HCT116 (cell line): ENCODE measurements at regions of chr4 and their contacts with region 1.

Region 1: DNA sequence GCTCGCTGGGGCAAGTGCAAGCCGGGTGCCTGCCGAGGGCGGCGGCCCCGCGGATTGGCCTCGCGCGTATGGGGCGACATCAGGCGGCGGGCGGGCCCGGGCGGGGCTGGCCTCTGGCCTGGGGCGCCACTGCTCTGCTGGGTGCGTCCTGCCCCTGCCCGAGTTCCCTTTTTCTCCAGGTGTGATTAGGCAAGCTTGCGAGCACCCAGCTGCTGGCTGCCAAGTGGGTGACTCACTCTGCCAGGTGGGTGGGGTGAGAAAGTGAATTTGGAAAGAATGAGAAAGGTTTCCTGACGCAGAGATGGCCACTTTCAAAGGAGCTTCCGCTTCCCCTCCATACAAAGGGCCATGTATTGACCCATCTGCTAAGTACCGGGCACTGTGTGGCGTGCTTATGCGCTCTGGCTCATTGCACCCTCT is 32.5 kb downstream of the FGFBP1 start:
- DNase-seq: peak; percentile 95
- ATAC-seq: peak; percentile 95
- H3K4me3 ChIP-seq: peak overlapping the region; percentile 18 to 47
- H3K27ac ChIP-seq: peak overlapping the region; percentile 73
- H3K4me1 ChIP-seq: peaks cover 19 to 32% of the 10 kb centered on the region in 2 experiments
- H3K27me3 ChIP-seq: no peaks in the 10 kb centered on the region
- CTCF ChIP-seq: no peak
- POLR2A ChIP-seq: no peak
- RAD21 ChIP-seq: peak; percentile 43

Region 2: DNA sequence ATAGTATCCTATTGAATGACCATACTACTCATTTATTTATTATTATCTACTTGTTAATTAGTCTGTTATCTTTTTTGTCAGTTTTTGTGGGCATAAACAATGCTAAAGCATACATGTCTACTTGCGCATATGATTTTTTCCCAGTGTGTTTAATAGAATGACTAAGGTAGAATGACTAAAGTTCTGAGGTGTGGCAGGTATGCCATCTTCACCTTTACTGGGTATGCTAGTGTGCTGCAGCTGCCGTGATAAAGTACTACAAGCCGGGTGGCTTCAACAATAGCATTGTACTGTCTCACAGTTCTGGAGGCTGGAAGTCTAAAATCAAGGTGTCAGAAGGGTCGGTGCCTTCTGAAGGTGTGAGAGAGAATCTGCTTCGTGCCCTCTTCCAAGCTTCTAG is 108.7 kb before region 1 on chr4:
- CTCF ChIA-PET with region 1: no interaction called
- POLR2A ChIA-PET with region 1: no interaction called
- RAD21 ChIA-PET with region 1: no interaction called
- intact Hi-C with region 1: no loop called
- DNase-seq: no peak
- ATAC-seq: no peak
- H3K4me3 ChIP-seq: no peak overlapping the region
- H3K27ac ChIP-seq: no peak overlapping the region
- H3K4me1 ChIP-seq: no peaks in the 10 kb centered on the region
- H3K27me3 ChIP-seq: no peaks in the 10 kb centered on the region
- CTCF ChIP-seq: no peak
- POLR2A ChIP-seq: no peak
- RAD21 ChIP-seq: no peak

Region 3: GRCh38 chr4:15920723-15921591 is 14.9 kb after region 1 on chr4:
- CTCF ChIA-PET with region 1: no interaction called
- POLR2A ChIA-PET with region 1: interaction called, 10 read pairs
- RAD21 ChIA-PET with region 1: no interaction called
- intact Hi-C with region 1: no loop called
- DNase-seq: peak; percentile 89
- ATAC-seq: peak; percentile 95
- H3K4me3 ChIP-seq: peak overlapping the region in 1 of 2 experiments; percentile 3; a peak in 1 of 4 replicates
- H3K27ac ChIP-seq: peak overlapping the region; percentile 51; the same call in 1 of the 2 replicates
- H3K4me1 ChIP-seq: peaks cover 12 to 37% of the 10 kb centered on the region in 2 experiments
- H3K27me3 ChIP-seq: no peaks in the 10 kb centered on the region
- CTCF ChIP-seq: no peak
- POLR2A ChIP-seq: no peak
- RAD21 ChIP-seq: no peak